Uterus (tissue), 4 donors: ENCODE measurements at regions of chr9 and their contacts with region 1.

Region 1: GRCh38 chr9:121992571-121993212 is 100.4 kb downstream of the TTLL11 start:
- DNase-seq: peak; percentile 59 to 82
- H3K4me3 ChIP-seq: no peak overlapping the region
- H3K27ac ChIP-seq: no peak overlapping the region
- H3K4me1 ChIP-seq: no peaks in the 10 kb centered on the region
- H3K27me3 ChIP-seq: no peaks in the 10 kb centered on the region
- CTCF ChIP-seq: peak; percentile 78 to 87 (median 81)
- POLR2A ChIP-seq: no peak

Region 2: GRCh38 chr9:121545875-121546423 is 446.7 kb before region 1 on chr9:
- intact Hi-C with region 1: loop called (anchors 10 kb)
- DNase-seq: peak; percentile 95 to 96
- H3K4me3 ChIP-seq: no peak overlapping the region
- H3K27ac ChIP-seq: peak overlapping the region in 1 of 2 donors; percentile 23
- H3K4me1 ChIP-seq: peaks cover 0 to 9% of the 10 kb centered on the region in 2 donors
- H3K27me3 ChIP-seq: no peaks in the 10 kb centered on the region
- CTCF ChIP-seq: peak; percentile 93 to 98 (median 96)
- POLR2A ChIP-seq: no peak

Region 3: DNA sequence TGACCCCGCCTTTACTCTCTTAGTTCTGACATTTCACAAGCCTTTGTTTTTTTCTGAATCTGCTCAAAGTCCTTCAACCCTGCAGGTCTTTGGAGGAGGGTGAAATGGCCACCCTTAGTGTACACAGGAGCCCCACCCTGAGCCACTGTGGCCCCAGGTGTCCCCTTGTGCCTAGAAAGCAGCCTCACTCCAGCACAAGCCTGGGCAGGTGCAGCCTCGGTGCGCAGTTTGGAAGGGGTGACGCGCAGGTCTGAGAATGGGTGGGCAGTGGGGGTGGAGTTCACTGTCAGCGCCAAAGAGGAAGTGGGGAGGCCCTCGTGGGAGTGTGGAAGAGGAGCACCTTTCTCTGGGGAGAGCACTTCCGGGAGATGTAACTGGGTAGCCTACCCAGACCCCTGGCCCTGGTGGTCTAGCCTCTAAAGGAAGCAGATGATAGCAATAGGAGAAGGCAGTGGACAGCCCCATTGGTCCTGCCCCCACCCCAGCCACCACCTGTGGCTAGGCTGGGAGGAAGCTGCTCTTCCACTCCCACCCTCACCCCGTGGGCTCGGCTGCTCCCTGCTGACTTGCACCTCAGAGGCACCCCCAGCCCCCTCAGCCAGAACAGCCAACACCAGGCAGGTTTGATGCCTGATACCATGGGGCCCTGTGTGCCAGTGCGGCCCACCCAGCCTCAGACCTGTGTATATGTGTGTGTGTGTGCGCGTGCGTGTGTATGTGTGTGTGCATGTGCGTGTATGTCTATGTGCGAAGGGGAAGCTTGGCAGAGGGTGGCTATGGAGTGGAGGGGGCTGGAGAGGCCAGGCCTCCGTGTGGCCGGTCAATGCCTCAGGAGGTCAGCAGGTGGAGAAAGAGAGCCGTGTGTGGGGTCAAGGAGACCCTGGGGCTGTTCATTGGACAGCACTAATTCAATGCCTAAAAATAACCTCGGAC is 358.1 kb before region 1 on chr9:
- intact Hi-C with region 1: loop called (anchors 10 kb)
- DNase-seq: peak in 1 of 2 donors; percentile 54
- H3K4me3 ChIP-seq: no peak overlapping the region
- H3K27ac ChIP-seq: peak overlapping the region; percentile 48 to 73
- H3K4me1 ChIP-seq: peaks cover 0 to 28% of the 10 kb centered on the region in 2 donors
- H3K27me3 ChIP-seq: no peaks in the 10 kb centered on the region
- CTCF ChIP-seq: peak; percentile 48 to 70 (median 60)
- POLR2A ChIP-seq: no peak

Region 4: GRCh38 chr9:121686930-121687541 is 305.7 kb before region 1 on chr9:
- intact Hi-C with region 1: loop called (anchors 5 kb)
- DNase-seq: peak; percentile 83 to 85
- H3K4me3 ChIP-seq: no peak overlapping the region
- H3K27ac ChIP-seq: peak overlapping the region; percentile 35 to 65
- H3K4me1 ChIP-seq: peaks cover 0 to 1% of the 10 kb centered on the region in 2 donors
- H3K27me3 ChIP-seq: no peaks in the 10 kb centered on the region
- CTCF ChIP-seq: peak; percentile 80 to 91 (median 86)
- POLR2A ChIP-seq: no peak

Region 5: GRCh38 chr9:122075135-122076030 is 82.7 kb after region 1 on chr9:
- intact Hi-C with region 1: no loop called
- DNase-seq: no peak
- H3K4me3 ChIP-seq: no peak overlapping the region
- H3K27ac ChIP-seq: peak overlapping the region; percentile 44 to 64
- H3K4me1 ChIP-seq: no peaks in the 10 kb centered on the region
- H3K27me3 ChIP-seq: no peaks in the 10 kb centered on the region
- CTCF ChIP-seq: no peak
- POLR2A ChIP-seq: no peak